ENCODE measurements at regions of chr6 and their contacts with region 1.

Region 1: DNA sequence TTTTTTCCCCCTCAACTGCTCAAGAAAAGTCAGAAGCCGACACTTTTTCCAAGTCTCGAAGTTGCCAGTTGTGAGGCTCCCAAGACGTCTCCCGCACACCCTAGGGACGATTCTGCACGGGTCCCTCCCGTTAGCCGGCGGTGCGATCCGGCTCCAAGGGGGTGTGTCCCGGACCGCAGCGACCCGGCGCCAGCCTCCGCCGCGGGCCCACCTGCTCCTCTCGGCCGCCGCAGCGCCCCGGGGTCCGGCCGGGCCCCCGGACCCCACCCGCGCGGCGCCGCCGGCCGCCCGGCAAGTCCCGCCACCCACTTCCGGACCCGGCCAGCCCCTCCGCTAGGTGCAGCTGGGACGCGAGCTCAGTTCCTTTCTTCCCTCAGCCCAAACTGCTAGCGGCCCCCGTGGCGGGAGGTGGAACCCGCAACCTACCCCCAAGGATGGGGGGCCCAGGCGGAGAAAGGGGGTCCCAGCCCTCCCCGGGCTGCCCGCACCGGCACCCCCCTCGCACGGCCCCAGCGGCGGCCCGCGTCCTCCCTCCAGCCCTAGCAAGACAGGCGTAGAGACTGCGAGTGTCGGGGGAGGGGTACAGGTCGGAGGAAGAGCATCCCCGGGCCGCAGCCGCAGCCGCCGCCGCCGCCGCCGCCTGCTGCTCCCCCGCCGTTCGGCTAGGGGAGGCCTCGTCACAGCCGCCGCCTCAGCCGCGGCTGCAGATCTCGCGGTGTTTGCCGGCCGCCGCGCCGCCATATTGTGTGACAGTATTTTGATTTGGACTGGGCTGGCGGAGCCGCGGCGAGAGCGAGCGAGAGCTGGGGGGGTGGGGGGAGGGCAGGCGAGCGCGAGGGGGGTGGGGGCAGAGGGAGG is 485 bp upstream of the TAB2 start:
- DNase-seq: peak; percentile 91 to 93 (median 92)
- H3K4me3 ChIP-seq: peak overlapping the region; percentile 27 to 64
- H3K4me3 Mint-ChIP-seq: peak overlapping the region; percentile 80 to 93 (median 87)
- H3K27ac ChIP-seq: peak overlapping the region; percentile 86
- H3K27ac Mint-ChIP-seq: peak overlapping the region; percentile 86 to 93 (median 89)
- H3K4me1 ChIP-seq: peaks cover 33% of the 10 kb centered on the region
- H3K4me1 Mint-ChIP-seq: peaks cover 14 to 40% (median 24%) of the 10 kb centered on the region in 4 donors
- H3K27me3 ChIP-seq: no peaks in the 10 kb centered on the region
- H3K27me3 Mint-ChIP-seq: no peaks in the 10 kb centered on the region

Region 2: GRCh38 chr6:149082286-149082707 is 234.7 kb before region 1 on chr6:
- CTCF ChIA-PET with region 1: interaction called, 9 read pairs
- POLR2A ChIA-PET with region 1: interaction called, 5 read pairs
- intact Hi-C with region 1: loop called (anchors 1 kb)
- DNase-seq: peak; percentile 76 to 86 (median 77)
- H3K4me3 ChIP-seq: no peak overlapping the region
- H3K4me3 Mint-ChIP-seq: peak overlapping the region in 4 of 8 donors; percentile 0 to 46 (median 25)
- H3K27ac ChIP-seq: no peak overlapping the region
- H3K27ac Mint-ChIP-seq: peak overlapping the region in 4 of 7 donors; percentile 12 to 85 (median 68)
- H3K4me1 ChIP-seq: peaks cover 40% of the 10 kb centered on the region
- H3K4me1 Mint-ChIP-seq: peaks cover 31 to 50% (median 38%) of the 10 kb centered on the region in 4 donors
- H3K27me3 ChIP-seq: no peaks in the 10 kb centered on the region
- H3K27me3 Mint-ChIP-seq: no peaks in the 10 kb centered on the region

Region 3: DNA sequence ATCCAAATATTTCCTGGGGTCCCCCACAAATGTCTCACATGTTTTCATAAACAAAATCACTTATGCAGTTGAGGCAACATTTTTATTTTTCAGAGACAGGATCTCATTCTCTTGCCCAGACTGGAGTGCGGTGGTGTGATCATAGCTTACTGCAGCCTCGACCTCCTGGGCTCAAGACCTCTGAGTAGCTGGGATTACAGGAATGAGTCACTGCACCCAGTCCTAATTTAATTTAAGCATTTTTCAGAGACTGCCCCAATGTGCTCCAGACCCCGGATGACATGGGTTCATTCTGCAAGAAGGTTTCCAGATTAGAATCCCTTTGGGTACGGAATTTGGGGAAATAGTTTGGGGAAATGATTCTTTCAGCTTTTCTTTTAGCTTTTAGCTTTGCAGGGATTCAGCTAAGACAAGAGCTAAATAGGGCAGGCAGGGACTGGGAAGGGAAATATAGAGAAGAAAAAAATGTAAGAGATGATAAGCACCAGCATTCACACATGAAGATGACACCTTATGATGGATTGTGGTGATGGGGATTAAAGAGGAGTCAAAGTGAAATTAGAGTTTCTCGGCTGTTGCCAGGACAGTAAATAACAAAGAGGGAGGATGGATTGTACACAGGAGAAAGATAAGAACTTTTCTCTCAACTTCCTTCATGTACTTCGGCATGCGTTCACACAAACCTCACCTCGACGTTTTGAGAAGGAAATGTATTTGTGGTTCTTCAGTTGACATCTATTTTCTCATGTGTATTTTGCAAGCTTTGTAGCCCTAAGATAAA is 168.9 kb before region 1 on chr6:
- CTCF ChIA-PET with region 1: no interaction called
- POLR2A ChIA-PET with region 1: interaction called, 9 read pairs
- intact Hi-C with region 1: loop called (anchors 5 kb)
- DNase-seq: peak; percentile 66 to 85 (median 75)
- H3K4me3 ChIP-seq: no peak overlapping the region
- H3K4me3 Mint-ChIP-seq: peak overlapping the region in 7 of 8 donors; percentile 27 to 80 (median 46)
- H3K27ac ChIP-seq: peak overlapping the region; percentile 78
- H3K27ac Mint-ChIP-seq: peak overlapping the region; percentile 87 to 98 (median 96)
- H3K4me1 ChIP-seq: peaks cover 72% of the 10 kb centered on the region
- H3K4me1 Mint-ChIP-seq: peaks cover 53 to 89% (median 71%) of the 10 kb centered on the region in 4 donors
- H3K27me3 ChIP-seq: no peaks in the 10 kb centered on the region
- H3K27me3 Mint-ChIP-seq: no peaks in the 10 kb centered on the region

Region 4: DNA sequence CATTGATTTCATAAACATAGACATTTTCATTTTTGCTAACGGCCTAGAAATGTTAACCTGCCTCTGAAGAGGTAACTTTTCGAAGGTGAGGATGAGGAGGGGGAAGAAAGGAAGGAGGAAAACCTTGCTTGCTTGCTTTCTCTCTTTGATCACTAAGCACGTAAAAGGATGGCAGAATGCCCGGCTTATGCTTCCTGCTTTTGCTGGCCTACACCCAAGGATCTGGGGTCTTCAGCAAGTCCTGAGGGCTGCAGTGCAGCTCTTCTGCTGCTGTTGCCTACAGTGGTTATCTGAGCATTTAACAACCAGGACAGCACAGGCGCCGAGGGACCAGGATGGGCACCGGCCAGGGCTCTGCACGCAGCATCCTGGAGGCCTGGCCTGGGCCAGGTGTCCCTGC is 150.3 kb before region 1 on chr6:
- CTCF ChIA-PET with region 1: no interaction called
- POLR2A ChIA-PET with region 1: no interaction called
- intact Hi-C with region 1: no loop called
- DNase-seq: no peak
- H3K4me3 ChIP-seq: no peak overlapping the region
- H3K4me3 Mint-ChIP-seq: peak overlapping the region in 6 of 8 donors; percentile 30 to 82 (median 66)
- H3K27ac ChIP-seq: no peak overlapping the region
- H3K27ac Mint-ChIP-seq: peak overlapping the region in 6 of 7 donors; percentile 5 to 86 (median 53)
- H3K4me1 ChIP-seq: peaks cover 31% of the 10 kb centered on the region
- H3K4me1 Mint-ChIP-seq: peaks cover 23 to 47% (median 38%) of the 10 kb centered on the region in 4 donors
- H3K27me3 ChIP-seq: no peaks in the 10 kb centered on the region
- H3K27me3 Mint-ChIP-seq: no peaks in the 10 kb centered on the region

Region 5: GRCh38 chr6:149211046-149211571 is 105.9 kb before region 1 on chr6:
- CTCF ChIA-PET with region 1: interaction called, 3 read pairs
- POLR2A ChIA-PET with region 1: interaction called, 29 read pairs
- intact Hi-C with region 1: no loop called
- DNase-seq: no peak
- H3K4me3 ChIP-seq: no peak overlapping the region
- H3K4me3 Mint-ChIP-seq: peak overlapping the region in 7 of 8 donors; percentile 48 to 67 (median 52)
- H3K27ac ChIP-seq: no peak overlapping the region
- H3K27ac Mint-ChIP-seq: peak overlapping the region in 6 of 7 donors; percentile 65 to 89 (median 80)
- H3K4me1 ChIP-seq: peaks cover 49% of the 10 kb centered on the region
- H3K4me1 Mint-ChIP-seq: peaks cover 0 to 26% (median 16%) of the 10 kb centered on the region in 4 donors
- H3K27me3 ChIP-seq: no peaks in the 10 kb centered on the region
- H3K27me3 Mint-ChIP-seq: no peaks in the 10 kb centered on the region

Region 6: GRCh38 chr6:149264629-149265028 is 52.4 kb before region 1 on chr6:
- CTCF ChIA-PET with region 1: interaction called, 3 read pairs
- POLR2A ChIA-PET with region 1: interaction called, 4 read pairs
- intact Hi-C with region 1: loop called (anchors 5 kb)
- DNase-seq: peak; percentile 48 to 64 (median 55)
- H3K4me3 ChIP-seq: peak overlapping the region in 1 of 2 donors; percentile 8
- H3K4me3 Mint-ChIP-seq: peak overlapping the region in 6 of 8 donors; percentile 2 to 74 (median 58)
- H3K27ac ChIP-seq: no peak overlapping the region
- H3K27ac Mint-ChIP-seq: peak overlapping the region in 6 of 7 donors; percentile 20 to 86 (median 58)
- H3K4me1 ChIP-seq: peaks cover 42% of the 10 kb centered on the region
- H3K4me1 Mint-ChIP-seq: peaks cover 21 to 51% (median 35%) of the 10 kb centered on the region in 4 donors
- H3K27me3 ChIP-seq: no peaks in the 10 kb centered on the region
- H3K27me3 Mint-ChIP-seq: no peaks in the 10 kb centered on the region

Region 7: DNA sequence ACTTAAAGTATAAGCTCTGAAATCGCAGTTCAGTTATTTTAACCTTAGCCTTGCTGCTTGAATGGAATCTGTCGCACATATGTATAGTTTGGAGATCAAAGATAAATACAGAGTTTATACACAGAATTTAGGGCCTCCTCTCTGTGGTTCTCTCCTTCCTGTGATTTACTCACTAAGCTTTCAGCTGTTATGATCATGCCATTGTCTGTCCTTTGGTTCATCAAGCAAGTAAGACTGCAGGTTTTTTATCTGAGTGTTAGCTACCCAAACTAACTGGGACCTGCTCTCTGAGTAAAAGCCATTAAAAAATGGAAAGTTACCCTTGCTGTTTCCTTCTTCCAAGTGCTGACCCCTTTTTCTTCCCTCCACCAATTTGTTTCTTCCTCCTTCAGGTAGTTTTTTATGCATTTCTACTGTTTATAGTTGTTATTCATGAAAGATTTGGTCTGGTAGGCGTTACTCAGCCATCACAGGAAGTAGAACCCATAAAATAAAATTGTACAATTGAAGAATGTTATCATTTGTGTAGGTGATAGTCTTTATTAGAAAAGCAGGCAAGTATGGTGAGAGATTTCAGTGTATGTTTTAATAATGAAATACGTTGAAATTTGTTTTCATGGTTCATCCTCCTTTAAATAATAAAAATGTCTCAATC is 49.4 kb after region 1 on chr6:
- CTCF ChIA-PET with region 1: no interaction called
- POLR2A ChIA-PET with region 1: interaction called, 8 read pairs
- intact Hi-C with region 1: loop called (anchors 2 kb)
- DNase-seq: peak in 4 of 5 donors; percentile 43 to 65 (median 50)
- H3K4me3 ChIP-seq: no peak overlapping the region
- H3K4me3 Mint-ChIP-seq: no peak overlapping the region
- H3K27ac ChIP-seq: peak overlapping the region; percentile 31
- H3K27ac Mint-ChIP-seq: no peak overlapping the region
- H3K4me1 ChIP-seq: peaks cover 93% of the 10 kb centered on the region
- H3K4me1 Mint-ChIP-seq: peaks cover 30 to 42% (median 37%) of the 10 kb centered on the region in 4 donors
- H3K27me3 ChIP-seq: no peaks in the 10 kb centered on the region
- H3K27me3 Mint-ChIP-seq: no peaks in the 10 kb centered on the region

Region 8: DNA sequence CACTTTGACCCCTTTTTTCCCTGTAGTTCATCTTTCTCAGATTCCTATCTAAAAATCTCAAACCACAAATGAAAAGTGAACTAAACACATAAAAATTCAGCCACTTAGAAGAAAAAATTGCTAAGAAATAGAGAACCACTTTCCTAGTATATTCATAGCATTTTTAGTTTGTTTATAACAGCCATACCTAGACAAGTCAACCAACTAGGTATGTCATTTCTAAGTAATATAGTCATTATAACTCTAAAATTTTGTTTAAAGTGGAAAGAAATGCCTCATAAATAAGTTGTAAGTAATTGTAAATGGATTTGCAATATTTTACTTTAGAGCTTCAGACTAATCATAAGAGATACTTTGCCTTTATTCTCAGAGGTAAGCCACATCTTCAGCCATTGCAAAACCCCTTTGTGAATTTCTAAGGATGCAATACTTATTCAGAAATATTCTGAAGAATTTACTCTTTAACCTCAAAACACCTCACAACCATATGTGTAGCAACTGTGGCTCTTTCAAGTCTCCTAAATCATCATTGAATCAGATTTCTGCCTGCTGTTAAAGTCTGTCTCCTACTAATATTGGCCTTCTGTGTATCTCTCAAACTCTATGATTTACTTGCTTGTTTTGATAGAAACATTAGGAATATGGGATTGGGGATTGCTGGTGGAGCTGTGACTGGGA is 76.1 kb after region 1 on chr6:
- CTCF ChIA-PET with region 1: no interaction called
- POLR2A ChIA-PET with region 1: no interaction called
- intact Hi-C with region 1: no loop called
- DNase-seq: no peak
- H3K4me3 ChIP-seq: no peak overlapping the region
- H3K4me3 Mint-ChIP-seq: peak overlapping the region in 4 of 8 donors; percentile 30 to 42 (median 36)
- H3K27ac ChIP-seq: no peak overlapping the region
- H3K27ac Mint-ChIP-seq: peak overlapping the region in 5 of 7 donors; percentile 3 to 70 (median 47)
- H3K4me1 ChIP-seq: peaks cover 39% of the 10 kb centered on the region
- H3K4me1 Mint-ChIP-seq: peaks cover 48 to 69% (median 57%) of the 10 kb centered on the region in 4 donors
- H3K27me3 ChIP-seq: no peaks in the 10 kb centered on the region
- H3K27me3 Mint-ChIP-seq: no peaks in the 10 kb centered on the region

Region 9: DNA sequence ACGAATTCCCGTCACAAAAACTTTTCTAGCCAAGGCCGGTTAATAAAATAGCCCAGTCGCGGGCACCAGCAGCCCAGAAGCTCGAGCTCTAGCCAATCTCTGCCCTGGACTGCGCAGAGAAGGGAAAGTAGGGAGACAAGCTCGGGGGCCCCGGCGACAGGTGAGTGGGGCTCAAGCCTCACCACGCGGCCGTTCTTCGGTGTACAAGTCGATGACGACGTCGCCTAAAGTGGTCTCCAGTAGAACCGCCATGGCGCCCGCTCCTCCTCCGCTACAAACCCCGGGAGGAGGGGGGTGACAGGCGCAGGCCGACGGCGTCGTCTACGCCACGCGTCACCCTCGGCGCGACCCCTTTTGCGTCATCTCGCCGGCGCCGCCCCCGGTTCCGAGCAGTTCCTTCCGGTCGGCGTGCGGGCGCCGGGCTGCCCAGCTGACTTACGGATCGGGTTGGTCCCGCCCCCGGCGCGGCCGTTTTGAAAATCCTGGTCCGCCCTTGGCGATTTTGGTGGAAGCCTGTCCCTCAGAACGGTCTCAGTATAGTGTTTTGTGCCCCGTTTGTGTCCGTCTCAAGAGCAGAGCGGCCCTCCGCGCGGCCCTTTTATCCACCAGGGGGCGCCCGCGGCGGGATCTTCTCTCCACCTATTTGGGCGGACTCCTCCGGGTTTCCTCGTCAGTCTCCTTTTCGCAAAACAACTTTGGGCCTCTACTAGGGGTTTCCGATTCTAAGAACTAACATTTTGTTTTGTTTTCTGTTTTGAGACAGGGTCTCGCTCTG is 228.9 kb after region 1 on chr6 and contains the start of gene PPIL4:
- CTCF ChIA-PET with region 1: no interaction called
- POLR2A ChIA-PET with region 1: interaction called, 3 read pairs
- intact Hi-C with region 1: loop called (anchors 10 kb)
- DNase-seq: peak; percentile 94 to 98 (median 97)
- H3K4me3 ChIP-seq: peak within 1 kb of the TSS; percentile 68 to 74
- H3K4me3 Mint-ChIP-seq: peak within 1 kb of the TSS; percentile 97 to 100 (median 98)
- H3K27ac ChIP-seq: peak within 1 kb of the TSS; percentile 100
- H3K27ac Mint-ChIP-seq: peak within 1 kb of the TSS; percentile 98 to 100 (median 100)
- H3K4me1 ChIP-seq: peaks cover 32% of the 10 kb centered on the region
- H3K4me1 Mint-ChIP-seq: peaks cover 27 to 50% (median 38%) of the 10 kb centered on the region in 4 donors
- H3K27me3 ChIP-seq: no peaks in the 10 kb centered on the region
- H3K27me3 Mint-ChIP-seq: peaks cover 0 to 3% of the 10 kb centered on the region in 2 donors
- total RNA-seq, gene PPIL4: 33.1 to 35.7 TPM

Measured in CD4-positive, alpha-beta memory T cell (primary cell).